ENCODE measurements at regions of chr5 and their contacts with region 1.

Region 1: DNA sequence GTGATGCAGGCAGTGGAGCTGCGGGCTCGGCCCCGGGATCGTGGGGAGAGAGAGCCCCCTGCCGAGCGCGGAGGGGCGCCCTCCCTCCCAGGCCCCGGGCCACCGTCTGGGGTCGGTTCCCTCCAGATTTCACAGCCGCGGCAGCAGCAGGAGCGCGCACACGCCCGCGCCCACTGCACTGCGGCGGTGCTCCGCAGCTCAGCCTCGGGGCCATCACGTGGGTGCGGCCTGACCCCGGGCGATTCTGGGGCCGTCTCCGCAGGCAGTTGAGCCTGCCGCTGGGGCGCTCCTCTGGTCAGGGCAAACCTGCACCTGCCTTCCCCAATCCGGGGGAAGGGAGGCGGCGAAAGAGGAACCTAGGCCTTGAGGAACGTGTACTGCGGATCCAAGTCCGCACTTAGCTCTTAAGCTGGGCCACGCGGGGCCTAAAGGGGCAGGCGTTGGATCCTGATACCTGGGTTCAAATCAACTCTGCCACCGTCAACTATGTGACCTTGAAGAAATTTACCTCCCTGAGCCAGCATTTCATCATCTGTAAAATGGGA is 9.4 kb upstream of the DELE1 start:
- DNase-seq: peak in 1 of 2 experiments; percentile 77
- H3K4me3 ChIP-seq: peak overlapping the region; percentile 5 to 64 (median 47)
- H3K27ac ChIP-seq: no peak overlapping the region
- H3K4me1 ChIP-seq: peaks cover 4 to 10% (median 6%) of the 10 kb centered on the region in 4 experiments; a peak in 6 of 7 replicates
- H3K27me3 ChIP-seq: peaks cover 3 to 17% (median 7%) of the 10 kb centered on the region in 4 experiments
- CTCF ChIP-seq: peak in 2 of 3 experiments; percentile 12 to 13; a peak in 3 of 4 replicates
- EP300 ChIP-seq: 0 out of 3 replicates have a peak, but pooled peaks of 1 of the 2 experiments have one; percentile 21
- POLR2A ChIP-seq: peak in 1 of 2 experiments; percentile 50; a peak in 1 of 3 replicates
- RAD21 ChIP-seq: peak; percentile 36 to 45; a peak in 3 of 4 replicates

Region 2: DNA sequence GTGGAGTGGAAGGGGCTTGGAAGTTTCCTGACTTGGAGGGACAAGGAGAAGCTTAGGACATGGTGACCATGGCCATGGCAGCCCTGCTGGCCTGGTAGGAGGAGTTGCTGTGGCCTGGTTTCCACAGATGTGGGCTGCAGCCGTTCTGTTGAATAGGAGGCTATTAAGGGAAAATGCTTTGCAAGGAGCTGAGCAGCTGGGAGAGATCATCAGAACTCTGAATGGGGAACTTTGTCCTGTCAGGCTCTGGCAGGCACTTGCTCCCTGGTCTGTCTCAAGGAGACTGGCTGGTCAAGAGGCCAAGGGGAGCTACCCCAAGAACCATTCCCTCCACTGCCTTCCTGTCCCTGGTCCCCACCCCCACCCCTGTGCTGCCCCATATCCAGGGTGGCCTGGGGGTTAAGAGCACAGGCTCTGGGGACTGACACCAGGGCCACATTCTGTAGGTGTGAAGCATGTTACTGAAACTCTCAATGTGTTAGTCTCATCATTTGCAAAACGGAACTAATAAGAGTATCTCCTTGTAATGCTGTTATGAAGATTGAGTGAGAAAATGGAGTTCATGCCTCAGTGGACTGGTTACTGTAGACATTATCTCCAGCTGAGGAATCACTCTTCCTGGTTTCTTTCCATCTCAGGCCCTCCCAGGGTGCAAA is 148.2 kb before region 1 on chr5:
- CTCF ChIA-PET with region 1: no interaction called
- POLR2A ChIA-PET with region 1: no interaction called
- DNase-seq: no peak
- H3K4me3 ChIP-seq: no peak overlapping the region
- H3K27ac ChIP-seq: no peak overlapping the region
- H3K4me1 ChIP-seq: peaks cover 0 to 4% (median 0%) of the 10 kb centered on the region in 4 experiments; a peak in 2 of 7 replicates
- H3K27me3 ChIP-seq: no peaks in the 10 kb centered on the region; a peak in 2 of 7 replicates
- CTCF ChIP-seq: no peak
- EP300 ChIP-seq: no peak
- POLR2A ChIP-seq: no peak
- RAD21 ChIP-seq: no peak

Region 3: GRCh38 chr5:141832131-141832918 is 81.9 kb before region 1 on chr5:
- CTCF ChIA-PET with region 1: no interaction called
- POLR2A ChIA-PET with region 1: no interaction called
- DNase-seq: no peak
- H3K4me3 ChIP-seq: no peak overlapping the region
- H3K27ac ChIP-seq: no peak overlapping the region
- H3K4me1 ChIP-seq: peaks cover 10 to 21% (median 14%) of the 10 kb centered on the region in 4 experiments; a peak in 6 of 7 replicates
- H3K27me3 ChIP-seq: no peaks in the 10 kb centered on the region
- CTCF ChIP-seq: no peak
- EP300 ChIP-seq: no peak
- POLR2A ChIP-seq: no peak
- RAD21 ChIP-seq: no peak

Region 4: DNA sequence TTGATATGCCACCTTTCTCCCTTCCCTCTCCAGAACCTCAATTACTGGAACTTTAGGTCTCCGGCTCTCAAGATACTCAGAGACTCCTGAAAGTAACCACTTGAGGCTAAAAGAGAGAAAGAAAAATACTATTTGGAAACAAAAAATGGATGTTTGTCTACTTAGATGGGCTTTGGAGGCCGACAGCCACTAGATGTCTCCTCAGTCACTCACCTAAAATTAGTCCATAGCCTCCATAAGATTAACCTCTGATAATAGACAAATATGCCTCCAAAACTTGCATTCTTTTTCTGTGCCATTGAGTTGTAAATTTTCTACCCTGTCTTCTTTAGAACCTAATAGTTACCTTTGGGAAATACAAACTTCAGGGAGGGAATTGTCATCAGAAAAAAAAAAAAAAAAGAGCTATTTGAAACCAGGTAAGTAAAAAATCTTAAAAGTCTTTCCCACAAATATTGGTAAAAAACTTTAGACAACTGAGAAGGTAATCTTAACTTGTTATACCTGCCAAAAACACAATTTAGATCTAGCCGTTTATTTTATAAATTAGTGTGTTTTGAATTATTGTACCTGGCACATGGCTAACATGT is 24.9 kb before region 1 on chr5:
- CTCF ChIA-PET with region 1: interaction called, 26 read pairs
- POLR2A ChIA-PET with region 1: no interaction called
- DNase-seq: no peak
- H3K4me3 ChIP-seq: no peak overlapping the region
- H3K27ac ChIP-seq: no peak overlapping the region
- H3K4me1 ChIP-seq: no peaks in the 10 kb centered on the region
- H3K27me3 ChIP-seq: no peaks in the 10 kb centered on the region
- CTCF ChIP-seq: no peak; a peak in 1 of 4 replicates
- EP300 ChIP-seq: no peak
- POLR2A ChIP-seq: no peak
- RAD21 ChIP-seq: peak; percentile 25 to 49; a peak in 3 of 4 replicates

Region 5: DNA sequence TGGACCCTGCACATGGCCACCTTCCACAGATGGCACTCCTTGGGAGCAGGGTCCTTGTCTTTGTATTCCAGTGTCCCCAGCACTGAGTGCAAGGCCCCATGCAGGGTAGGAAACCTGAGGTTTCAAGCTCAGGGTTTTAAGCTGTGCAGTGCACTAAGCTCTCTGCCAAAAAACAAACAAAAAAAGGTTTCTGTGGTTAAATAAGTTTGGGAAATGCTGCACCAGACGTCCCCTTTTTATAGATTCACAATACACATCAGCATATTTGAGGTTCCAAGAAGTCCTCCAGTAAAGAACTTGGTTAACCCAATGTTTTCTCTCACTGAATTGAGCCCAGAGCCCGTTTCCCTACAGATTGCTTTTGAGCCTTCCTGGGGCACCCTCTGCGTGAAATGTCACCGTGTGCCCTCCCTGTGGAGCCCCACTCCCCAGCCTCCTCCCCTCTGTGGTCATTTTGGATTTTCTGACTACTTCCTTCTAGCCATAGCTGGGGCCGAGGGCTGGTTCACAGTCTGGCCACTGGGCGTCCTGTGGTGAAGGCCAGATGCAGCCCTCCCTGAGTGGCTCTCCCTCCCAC is 26.5 kb after region 1 on chr5:
- CTCF ChIA-PET with region 1: interaction called, 22 read pairs
- POLR2A ChIA-PET with region 1: interaction called, 6 read pairs
- DNase-seq: no peak
- H3K4me3 ChIP-seq: no peak overlapping the region
- H3K27ac ChIP-seq: no peak overlapping the region
- H3K4me1 ChIP-seq: peaks cover 0 to 9% (median 7%) of the 10 kb centered on the region in 4 experiments; a peak in 5 of 7 replicates
- H3K27me3 ChIP-seq: no peaks in the 10 kb centered on the region; a peak in 1 of 7 replicates
- CTCF ChIP-seq: no peak
- EP300 ChIP-seq: no peak
- POLR2A ChIP-seq: no peak
- RAD21 ChIP-seq: no peak